ENCODE measurements at regions of chr6 and their contacts with region 1.

Region 1: DNA sequence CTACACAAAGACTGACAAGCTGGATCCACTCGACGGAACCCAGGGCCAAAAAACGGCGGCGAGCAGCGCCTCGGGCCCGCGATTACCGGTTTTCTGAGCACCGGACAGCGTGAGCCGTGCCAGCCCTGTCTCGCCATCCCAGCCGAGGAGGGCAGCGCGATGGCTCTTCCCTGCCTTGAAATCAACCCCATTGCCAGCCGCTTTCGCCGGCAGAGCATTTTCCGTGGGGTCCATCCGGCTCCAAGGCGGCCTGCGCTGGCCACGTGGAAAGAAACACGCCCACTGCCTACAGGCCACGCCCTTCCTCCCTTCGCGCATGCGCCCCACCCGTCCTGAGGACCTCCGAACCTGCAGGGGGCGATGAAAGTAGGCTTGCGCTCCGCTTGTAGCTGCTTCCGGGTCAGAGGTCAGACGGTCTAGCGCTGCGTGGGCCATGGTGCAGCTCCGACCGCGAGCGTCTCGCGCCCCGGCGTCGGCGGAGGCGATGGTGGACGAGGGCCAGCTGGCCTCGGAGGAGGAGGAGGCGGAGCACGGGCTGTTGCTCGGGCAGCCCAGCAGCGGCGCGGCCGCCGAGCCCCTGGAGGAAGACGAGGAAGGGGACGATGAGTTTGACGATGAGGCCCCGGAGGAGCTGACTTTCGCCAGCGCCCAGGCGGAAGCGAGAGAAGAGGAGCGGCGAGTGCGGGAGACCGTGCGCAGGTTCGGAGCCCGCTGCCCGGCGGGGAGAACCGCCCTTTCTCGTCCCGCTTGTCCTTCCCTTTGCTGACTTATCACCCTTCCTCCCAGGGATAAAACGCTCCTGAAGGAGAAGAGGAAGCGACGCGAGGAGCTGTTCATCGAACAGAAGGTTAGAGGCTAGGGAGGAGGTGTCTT is at the start of gene NOL7:
- DNase-seq: peak; percentile 99
- ATAC-seq: peak; percentile 93
- H3K4me3 ChIP-seq: peak within 1 kb of the TSS; percentile 79 to 94 (median 93)
- H3K4me3 Mint-ChIP-seq: peak within 1 kb of the TSS; percentile 97
- H3K27ac ChIP-seq: peak within 1 kb of the TSS; percentile 73 to 82
- H3K27ac Mint-ChIP-seq: peak within 1 kb of the TSS; percentile 97
- H3K4me1 ChIP-seq: peaks cover 16 to 22% of the 10 kb centered on the region in 2 donors
- H3K4me1 Mint-ChIP-seq: peaks cover 46% of the 10 kb centered on the region
- H3K27me3 ChIP-seq: no peaks in the 10 kb centered on the region
- H3K27me3 Mint-ChIP-seq: no peaks in the 10 kb centered on the region
- CTCF ChIP-seq: peak; percentile 86
- total RNA-seq, gene NOL7: 48.6 and 58.3 TPM in 2 replicates

Region 2: DNA sequence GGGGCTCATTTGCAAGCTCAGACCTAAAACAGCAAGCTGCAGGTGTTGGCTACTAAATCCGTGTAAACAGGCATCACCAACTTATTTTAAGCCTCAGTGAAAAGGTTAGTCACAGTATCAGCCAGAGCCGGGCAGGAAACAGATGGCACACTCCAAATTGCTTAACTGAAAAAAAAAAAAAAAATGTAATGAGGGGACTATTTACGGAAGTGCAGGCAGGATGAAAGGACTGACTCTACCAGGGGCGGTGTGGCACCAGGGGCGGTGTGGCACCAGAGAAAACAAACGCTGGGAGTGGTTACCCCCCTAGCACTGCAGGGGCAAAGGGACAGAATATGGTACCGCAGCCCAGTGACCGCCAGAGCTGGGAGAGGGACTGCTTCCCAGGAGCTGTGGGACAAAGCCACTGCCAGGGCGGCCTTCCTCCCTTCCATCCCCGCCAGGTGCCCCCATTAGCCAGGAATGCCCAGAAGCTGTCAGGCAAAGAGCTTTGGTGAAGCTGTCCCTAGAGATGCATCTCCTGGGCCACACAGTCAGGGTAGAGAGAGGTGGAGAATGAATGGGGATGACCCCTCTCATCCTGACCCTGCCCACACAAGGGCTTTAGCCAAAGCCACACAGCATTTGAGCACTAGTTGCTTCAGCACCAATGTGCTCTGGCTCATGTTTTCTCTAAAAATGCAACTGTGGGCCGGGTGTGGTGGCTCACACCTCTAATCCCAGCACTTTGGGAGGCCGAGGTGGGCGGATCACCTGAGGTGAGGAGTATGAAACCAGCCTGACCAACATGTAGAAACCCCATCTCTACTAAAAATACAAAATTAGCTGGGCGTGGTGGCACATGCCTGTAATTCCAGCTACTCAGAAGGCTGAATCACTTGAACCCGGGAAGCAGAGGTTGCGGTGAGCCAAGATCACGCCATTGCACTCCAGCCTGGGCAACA is 88.2 kb before region 1 on chr6:
- CTCF ChIA-PET with region 1: interaction called, 7 read pairs
- POLR2A ChIA-PET with region 1: interaction called, 10 read pairs
- intact Hi-C with region 1: loop called (anchors 1 kb)
- DNase-seq: peak; percentile 86
- ATAC-seq: peak; percentile 88
- H3K4me3 ChIP-seq: peak overlapping the region in 3 of 5 experiments; percentile 0 to 33 (median 11)
- H3K4me3 Mint-ChIP-seq: peak overlapping the region; percentile 40
- H3K27ac ChIP-seq: peak overlapping the region; percentile 76 to 89
- H3K27ac Mint-ChIP-seq: peak overlapping the region; percentile 88
- H3K4me1 ChIP-seq: peaks cover 38 to 41% of the 10 kb centered on the region in 2 donors
- H3K4me1 Mint-ChIP-seq: peaks cover 47% of the 10 kb centered on the region
- H3K27me3 ChIP-seq: no peaks in the 10 kb centered on the region
- H3K27me3 Mint-ChIP-seq: no peaks in the 10 kb centered on the region
- CTCF ChIP-seq: peak; percentile 33

Region 3: GRCh38 chr6:13630499-13630898 is 15.3 kb after region 1 on chr6:
- CTCF ChIA-PET with region 1: interaction called, 32 read pairs
- POLR2A ChIA-PET with region 1: interaction called, 4 read pairs
- intact Hi-C with region 1: no loop called
- DNase-seq: no peak
- ATAC-seq: no peak
- H3K4me3 ChIP-seq: no peak overlapping the region
- H3K4me3 Mint-ChIP-seq: no peak overlapping the region
- H3K27ac ChIP-seq: no peak overlapping the region
- H3K27ac Mint-ChIP-seq: no peak overlapping the region
- H3K4me1 ChIP-seq: no peaks in the 10 kb centered on the region
- H3K4me1 Mint-ChIP-seq: peaks cover 6% of the 10 kb centered on the region
- H3K27me3 ChIP-seq: no peaks in the 10 kb centered on the region
- H3K27me3 Mint-ChIP-seq: no peaks in the 10 kb centered on the region
- CTCF ChIP-seq: no peak

Region 4: DNA sequence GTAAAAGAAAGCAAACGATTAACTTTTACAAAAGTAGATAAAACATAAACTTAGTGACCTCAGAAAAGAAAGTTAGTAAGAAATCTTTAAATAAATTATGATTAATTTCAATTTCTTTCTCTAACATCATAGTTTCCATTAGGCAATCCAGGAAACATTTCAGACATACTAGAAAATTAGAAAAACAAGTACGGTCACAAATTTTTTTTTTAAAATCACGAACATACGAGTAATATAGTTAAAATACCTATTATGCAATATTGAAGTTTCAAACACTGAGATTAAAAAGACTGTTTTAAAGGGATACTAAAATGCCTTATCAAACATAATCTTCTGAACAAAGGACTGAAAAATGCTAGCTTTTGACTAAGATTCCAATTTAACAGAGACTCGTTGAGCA is 26.2 kb after region 1 on chr6:
- CTCF ChIA-PET with region 1: no interaction called
- POLR2A ChIA-PET with region 1: no interaction called
- intact Hi-C with region 1: no loop called
- DNase-seq: no peak
- ATAC-seq: no peak
- H3K4me3 ChIP-seq: no peak overlapping the region
- H3K4me3 Mint-ChIP-seq: no peak overlapping the region
- H3K27ac ChIP-seq: no peak overlapping the region
- H3K27ac Mint-ChIP-seq: no peak overlapping the region
- H3K4me1 ChIP-seq: no peaks in the 10 kb centered on the region
- H3K4me1 Mint-ChIP-seq: peaks cover 5% of the 10 kb centered on the region
- H3K27me3 ChIP-seq: no peaks in the 10 kb centered on the region
- H3K27me3 Mint-ChIP-seq: no peaks in the 10 kb centered on the region
- CTCF ChIP-seq: no peak

Region 5: DNA sequence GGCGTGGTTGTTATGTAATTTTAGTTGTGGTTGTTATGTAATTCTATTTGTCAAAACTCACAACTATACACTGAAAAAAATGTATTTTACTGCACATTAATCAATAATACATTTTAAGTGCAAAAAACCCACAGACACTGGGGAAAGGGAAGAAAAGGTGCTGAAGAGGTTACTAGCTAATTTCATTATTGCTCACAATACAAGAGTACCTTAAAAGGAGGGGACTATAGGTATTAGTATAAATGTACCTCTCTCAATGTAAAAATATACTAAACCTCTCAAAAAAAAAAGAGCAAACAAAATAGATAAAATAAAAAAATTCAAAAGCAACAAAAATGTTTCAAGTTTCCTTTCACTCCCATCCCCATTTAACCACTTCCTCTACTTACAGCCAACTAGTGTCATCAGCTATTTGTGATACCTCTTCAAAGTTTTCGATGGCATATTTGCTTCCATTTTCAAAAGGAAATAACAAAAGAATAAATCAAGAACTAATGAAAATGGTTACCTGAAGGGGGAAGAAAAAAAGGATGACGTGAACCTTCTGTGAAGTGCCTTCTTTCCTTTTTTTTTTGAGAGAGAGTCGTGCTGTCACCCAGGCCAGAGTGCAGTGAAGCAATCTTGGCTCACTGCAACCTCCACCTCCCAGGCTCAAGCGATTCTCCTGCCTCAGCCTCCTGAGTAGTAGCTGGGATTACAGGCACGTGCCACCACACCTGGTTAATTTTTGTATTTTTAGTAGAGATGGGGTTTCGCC is 66.3 kb after region 1 on chr6:
- CTCF ChIA-PET with region 1: no interaction called
- POLR2A ChIA-PET with region 1: no interaction called
- intact Hi-C with region 1: no loop called
- DNase-seq: peak; percentile 29
- ATAC-seq: no peak
- H3K4me3 ChIP-seq: no peak overlapping the region
- H3K4me3 Mint-ChIP-seq: no peak overlapping the region
- H3K27ac ChIP-seq: peak overlapping the region in 1 of 2 donors; percentile 42
- H3K27ac Mint-ChIP-seq: no peak overlapping the region
- H3K4me1 ChIP-seq: peaks cover 6 to 9% of the 10 kb centered on the region in 2 donors
- H3K4me1 Mint-ChIP-seq: peaks cover 36% of the 10 kb centered on the region
- H3K27me3 ChIP-seq: no peaks in the 10 kb centered on the region
- H3K27me3 Mint-ChIP-seq: no peaks in the 10 kb centered on the region
- CTCF ChIP-seq: no peak

Region 6: GRCh38 chr6:13711733-13712598 is 96.8 kb after region 1 on chr6 and contains the start of gene RANBP9:
- CTCF ChIA-PET with region 1: interaction called, 9 read pairs
- POLR2A ChIA-PET with region 1: no interaction called
- intact Hi-C with region 1: loop called (anchors 1 kb)
- DNase-seq: peak; percentile 94
- ATAC-seq: peak; percentile 82
- H3K4me3 ChIP-seq: peak within 1 kb of the TSS; percentile 58 to 88 (median 78)
- H3K4me3 Mint-ChIP-seq: peak within 1 kb of the TSS; percentile 96
- H3K27ac ChIP-seq: peak within 1 kb of the TSS; percentile 80 to 84
- H3K27ac Mint-ChIP-seq: peak within 1 kb of the TSS; percentile 96
- H3K4me1 ChIP-seq: peaks cover 29 to 33% of the 10 kb centered on the region in 2 donors
- H3K4me1 Mint-ChIP-seq: peaks cover 41% of the 10 kb centered on the region
- H3K27me3 ChIP-seq: no peaks in the 10 kb centered on the region
- H3K27me3 Mint-ChIP-seq: no peaks in the 10 kb centered on the region
- CTCF ChIP-seq: no peak
- total RNA-seq, gene RANBP9: 34.1 and 39.0 TPM in 2 replicates